ENCODE measurements at regions of chr1 and their contacts with region 1.

Region 1: GRCh38 chr1:211578640-211579433 is at the start of gene SLC30A1:
- DNase-seq: peak; percentile 99
- ATAC-seq: peak; percentile 97
- H3K4me3 ChIP-seq: peak within 1 kb of the TSS; percentile 66
- H3K4me3 Mint-ChIP-seq: peak within 1 kb of the TSS; percentile 88 to 96 (median 92)
- H3K27ac ChIP-seq: peak within 1 kb of the TSS; percentile 85
- H3K27ac Mint-ChIP-seq: peak within 1 kb of the TSS; percentile 72 to 93 (median 88)
- H3K4me1 ChIP-seq: peaks cover 3 to 5% of the 10 kb centered on the region in 2 donors
- H3K4me1 Mint-ChIP-seq: peaks cover 21 to 48% (median 44%) of the 10 kb centered on the region in 7 donors
- H3K27me3 ChIP-seq: no peaks in the 10 kb centered on the region
- H3K27me3 Mint-ChIP-seq: peaks cover 0 to 12% (median 0%) of the 10 kb centered on the region in 5 donors
- total RNA-seq, gene SLC30A1: 5.8 to 12.1 (median 8.8) TPM

Region 2: GRCh38 chr1:211382714-211383480 is 195.9 kb before region 1 on chr1:
- CTCF ChIA-PET with region 1: no interaction called
- POLR2A ChIA-PET with region 1: no interaction called
- intact Hi-C with region 1: loop called (anchors 1 kb)
- DNase-seq: peak; percentile 53 to 85 (median 64)
- ATAC-seq: peak; percentile 94
- H3K4me3 ChIP-seq: peak overlapping the region; percentile 77
- H3K4me3 Mint-ChIP-seq: peak overlapping the region; percentile 87 to 97 (median 92)
- H3K27ac ChIP-seq: peak overlapping the region; percentile 80
- H3K27ac Mint-ChIP-seq: peak overlapping the region; percentile 92 to 98 (median 95)
- H3K4me1 ChIP-seq: peaks cover 5% of the 10 kb centered on the region in 2 donors
- H3K4me1 Mint-ChIP-seq: peaks cover 0 to 39% (median 31%) of the 10 kb centered on the region in 7 donors
- H3K27me3 ChIP-seq: no peaks in the 10 kb centered on the region
- H3K27me3 Mint-ChIP-seq: peaks cover 0 to 5% (median 0%) of the 10 kb centered on the region in 5 donors

Region 3: DNA sequence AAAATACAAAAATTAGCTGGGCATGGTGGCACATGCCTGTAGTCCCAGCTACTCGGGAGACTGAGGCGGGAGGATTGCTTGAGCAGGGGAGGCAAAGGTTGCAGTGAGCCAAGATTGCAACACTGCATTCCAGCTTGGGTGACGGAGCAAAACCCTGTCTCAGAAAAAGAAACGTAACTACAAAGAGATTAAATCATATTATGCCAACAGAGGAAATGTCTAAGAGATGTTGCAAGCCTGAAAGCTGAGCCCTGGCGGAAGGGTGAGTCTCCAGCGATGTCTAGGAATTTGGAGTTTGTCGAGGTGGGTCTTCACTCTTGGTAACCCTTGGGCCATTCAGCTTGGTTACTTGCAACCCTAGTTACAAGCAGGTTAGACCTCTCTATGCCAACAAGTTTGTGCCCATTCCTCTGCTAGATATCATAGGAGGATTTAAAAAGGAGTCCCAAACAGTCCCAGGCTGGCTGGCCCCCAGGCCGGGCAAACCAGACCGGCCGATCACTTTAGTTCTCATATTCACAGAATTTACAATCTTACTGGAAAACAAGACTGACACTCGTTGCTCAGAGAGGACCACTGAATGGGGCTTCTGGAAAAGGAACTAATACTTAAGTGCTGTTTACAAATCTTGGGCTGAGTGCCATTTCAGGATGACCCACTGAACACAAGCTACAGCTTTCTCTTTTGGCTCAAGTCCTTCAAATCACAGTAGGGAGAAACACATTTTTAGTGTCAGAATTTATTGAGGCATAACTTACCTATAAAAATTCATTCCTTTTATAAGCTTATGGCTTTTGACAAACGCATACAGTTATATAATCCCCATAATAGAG is 27.0 kb before region 1 on chr1:
- CTCF ChIA-PET with region 1: no interaction called
- POLR2A ChIA-PET with region 1: no interaction called
- intact Hi-C with region 1: no loop called
- DNase-seq: peak in 1 of 9 donors; percentile 6
- ATAC-seq: peak; percentile 26
- H3K4me3 ChIP-seq: no peak overlapping the region
- H3K4me3 Mint-ChIP-seq: no peak overlapping the region
- H3K27ac ChIP-seq: no peak overlapping the region
- H3K27ac Mint-ChIP-seq: no peak overlapping the region
- H3K4me1 ChIP-seq: no peaks in the 10 kb centered on the region
- H3K4me1 Mint-ChIP-seq: peaks cover 0 to 5% (median 0%) of the 10 kb centered on the region in 7 donors
- H3K27me3 ChIP-seq: no peaks in the 10 kb centered on the region
- H3K27me3 Mint-ChIP-seq: peaks cover 0 to 24% (median 5%) of the 10 kb centered on the region in 5 donors

Region 4: GRCh38 chr1:211625040-211625439 is 46.2 kb after region 1 on chr1:
- CTCF ChIA-PET with region 1: no interaction called
- POLR2A ChIA-PET with region 1: no interaction called
- intact Hi-C with region 1: loop called (anchors 1 kb)
- DNase-seq: peak in 5 of 9 donors; percentile 11 to 35 (median 27)
- ATAC-seq: peak; percentile 91
- H3K4me3 ChIP-seq: no peak overlapping the region
- H3K4me3 Mint-ChIP-seq: no peak overlapping the region
- H3K27ac ChIP-seq: no peak overlapping the region
- H3K27ac Mint-ChIP-seq: no peak overlapping the region
- H3K4me1 ChIP-seq: no peaks in the 10 kb centered on the region
- H3K4me1 Mint-ChIP-seq: peaks cover 3 to 24% (median 9%) of the 10 kb centered on the region in 7 donors
- H3K27me3 ChIP-seq: no peaks in the 10 kb centered on the region
- H3K27me3 Mint-ChIP-seq: peaks cover 0 to 15% (median 0%) of the 10 kb centered on the region in 5 donors

Region 5: DNA sequence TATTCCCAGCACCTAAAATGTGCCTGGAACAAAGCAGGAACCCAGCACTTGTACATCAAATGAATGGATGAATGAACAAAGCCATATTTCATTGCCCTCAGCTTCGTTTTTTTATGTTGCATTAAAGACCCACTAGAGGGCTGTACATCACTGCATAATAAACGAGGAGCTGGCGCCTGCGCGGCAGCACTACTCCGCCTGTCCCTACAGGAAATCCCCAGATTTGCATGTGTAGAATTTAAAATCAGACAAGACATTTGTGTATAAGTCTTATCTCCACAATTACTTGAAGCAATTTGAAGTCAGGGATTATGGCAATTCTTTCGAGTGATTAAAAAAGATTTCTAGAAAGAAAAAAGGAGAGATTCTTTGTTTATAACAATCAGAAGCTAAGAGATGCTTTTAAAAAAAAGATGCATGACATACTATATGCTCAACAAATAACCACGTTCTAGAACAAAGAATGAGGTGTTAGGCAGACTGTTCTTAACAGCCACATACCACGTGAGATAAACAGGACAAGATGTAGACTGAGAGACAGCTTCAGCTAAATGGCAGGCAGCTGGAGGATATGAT is 102.0 kb after region 1 on chr1:
- CTCF ChIA-PET with region 1: no interaction called
- POLR2A ChIA-PET with region 1: interaction called, 4 read pairs
- intact Hi-C with region 1: loop called in 1 of 2 experiments (anchors 1 kb)
- DNase-seq: peak; percentile 44 to 85 (median 78)
- ATAC-seq: peak; percentile 98
- H3K4me3 ChIP-seq: no peak overlapping the region
- H3K4me3 Mint-ChIP-seq: peak overlapping the region in 9 of 10 donors; percentile 19 to 59 (median 50)
- H3K27ac ChIP-seq: peak overlapping the region; percentile 66
- H3K27ac Mint-ChIP-seq: peak overlapping the region; percentile 79 to 95 (median 87)
- H3K4me1 ChIP-seq: peaks cover 10 to 11% of the 10 kb centered on the region in 2 donors
- H3K4me1 Mint-ChIP-seq: peaks cover 9 to 22% (median 14%) of the 10 kb centered on the region in 7 donors
- H3K27me3 ChIP-seq: no peaks in the 10 kb centered on the region
- H3K27me3 Mint-ChIP-seq: no peaks in the 10 kb centered on the region

Region 6: DNA sequence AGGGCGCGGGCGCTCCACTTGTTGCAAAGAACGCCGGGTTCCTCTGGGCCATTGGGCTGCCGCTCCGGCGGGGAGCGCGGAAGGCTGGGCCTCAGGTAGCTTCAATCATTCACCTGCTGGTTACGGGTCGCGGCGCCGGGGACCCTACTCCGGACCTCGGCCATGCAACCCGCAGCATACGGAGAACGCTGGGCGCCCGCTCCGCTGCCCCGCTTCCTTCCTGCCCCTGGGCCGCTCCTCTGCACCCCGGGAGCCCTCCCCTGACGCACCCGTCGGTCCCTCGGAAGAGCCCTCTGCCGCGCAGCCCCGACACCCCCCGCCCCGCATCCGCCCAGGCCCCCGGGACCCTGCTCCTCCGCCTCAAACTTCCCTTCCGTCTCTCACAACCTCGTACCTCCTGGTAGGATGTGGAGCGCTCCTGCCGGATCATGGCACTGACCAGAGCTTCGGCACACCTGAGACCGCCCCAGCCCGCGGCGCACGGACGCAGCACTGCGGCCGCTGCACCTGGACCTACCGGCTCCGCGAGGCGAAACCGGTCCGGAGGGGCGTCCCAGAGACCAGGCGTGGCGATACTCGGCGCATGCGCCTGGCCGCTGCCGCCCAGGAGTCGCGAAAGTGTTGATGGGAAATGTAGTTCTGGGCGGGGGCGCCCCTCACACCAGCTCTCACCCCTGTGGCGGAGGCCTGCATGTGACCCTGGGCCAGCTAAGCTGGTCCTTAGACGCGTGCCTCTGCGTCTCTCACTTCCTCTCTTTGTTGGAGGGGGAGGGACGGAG is 835.7 kb after region 1 on chr1 and contains the start of gene PACC1:
- CTCF ChIA-PET with region 1: no interaction called
- POLR2A ChIA-PET with region 1: no interaction called
- intact Hi-C with region 1: loop called (anchors 2 to 10 kb)
- DNase-seq: peak; percentile 77 to 89 (median 86)
- ATAC-seq: peak; percentile 98
- H3K4me3 ChIP-seq: peak within 1 kb of the TSS; percentile 98
- H3K4me3 Mint-ChIP-seq: peak within 1 kb of the TSS; percentile 87 to 100 (median 94)
- H3K27ac ChIP-seq: peak within 1 kb of the TSS; percentile 71
- H3K27ac Mint-ChIP-seq: peak within 1 kb of the TSS; percentile 74 to 94 (median 89)
- H3K4me1 ChIP-seq: peaks cover 15 to 19% of the 10 kb centered on the region in 2 donors
- H3K4me1 Mint-ChIP-seq: peaks cover 22 to 46% (median 40%) of the 10 kb centered on the region in 7 donors
- H3K27me3 ChIP-seq: no peaks in the 10 kb centered on the region
- H3K27me3 Mint-ChIP-seq: no peaks in the 10 kb centered on the region
- total RNA-seq, gene PACC1: 7.9 to 13.4 (median 12.0) TPM

Region 7: GRCh38 chr1:212857992-212858460 is 1279.2 kb after region 1 on chr1 and contains the start of gene FLVCR1:
- CTCF ChIA-PET with region 1: no interaction called
- POLR2A ChIA-PET with region 1: no interaction called
- intact Hi-C with region 1: loop called in 1 of 2 experiments (anchors 1 kb)
- DNase-seq: peak; percentile 74 to 96 (median 80)
- ATAC-seq: peak; percentile 99
- H3K4me3 ChIP-seq: peak within 1 kb of the TSS; percentile 72
- H3K4me3 Mint-ChIP-seq: peak within 1 kb of the TSS in 6 of 10 donors; percentile 95 to 97 (median 96)
- H3K27ac ChIP-seq: peak within 1 kb of the TSS; percentile 68
- H3K27ac Mint-ChIP-seq: peak within 1 kb of the TSS; percentile 77 to 96 (median 89)
- H3K4me1 ChIP-seq: peaks cover 9 to 16% of the 10 kb centered on the region in 2 donors
- H3K4me1 Mint-ChIP-seq: peaks cover 9 to 34% (median 21%) of the 10 kb centered on the region in 7 donors
- H3K27me3 ChIP-seq: no peaks in the 10 kb centered on the region
- H3K27me3 Mint-ChIP-seq: no peaks in the 10 kb centered on the region
- total RNA-seq, gene FLVCR1: 7.4 to 12.2 (median 8.2) TPM

Measured in naive thymus-derived CD4-positive, alpha-beta T cell (primary cell).